ENCODE measurements at regions of chrX and their contacts with region 1.

Region 1: GRCh38 chrX:55160685-55161552 is 59.2 kb upstream of the PAGE5 start:
- DNase-seq: peak; percentile 70 to 88 (median 76)
- ATAC-seq: peak; percentile 100
- H3K4me3 ChIP-seq: peak overlapping the region; percentile 53
- H3K27ac ChIP-seq: peak overlapping the region; percentile 81
- H3K4me1 ChIP-seq: peaks cover 0 to 9% of the 10 kb centered on the region in 2 experiments; a peak in 3 of 5 replicates
- H3K27me3 ChIP-seq: no peaks in the 10 kb centered on the region
- CTCF ChIP-seq: peak; percentile 78 to 91 (median 81)
- EP300 ChIP-seq: no peak; the same call in 1 of the 2 replicates
- POLR2A ChIP-seq: peak; percentile 73
- RAD21 ChIP-seq: peak; percentile 76 to 84

Region 2: GRCh38 chrX:54891573-54891972 is 269.3 kb before region 1 on chrX:
- CTCF ChIA-PET with region 1: no interaction called
- POLR2A ChIA-PET with region 1: no interaction called
- in situ Hi-C with region 1: loop called (anchors 5 kb)
- intact Hi-C with region 1: no loop called
- DNase-seq: peak; percentile 16 to 58 (median 17)
- ATAC-seq: peak; percentile 81
- H3K4me3 ChIP-seq: no peak overlapping the region
- H3K27ac ChIP-seq: no peak overlapping the region
- H3K4me1 ChIP-seq: no peaks in the 10 kb centered on the region
- H3K27me3 ChIP-seq: no peaks in the 10 kb centered on the region
- CTCF ChIP-seq: peak; percentile 36 to 53 (median 38); a peak in 4 of 6 replicates
- EP300 ChIP-seq: no peak
- POLR2A ChIP-seq: no peak
- RAD21 ChIP-seq: peak; percentile 51 to 74

Region 3: DNA sequence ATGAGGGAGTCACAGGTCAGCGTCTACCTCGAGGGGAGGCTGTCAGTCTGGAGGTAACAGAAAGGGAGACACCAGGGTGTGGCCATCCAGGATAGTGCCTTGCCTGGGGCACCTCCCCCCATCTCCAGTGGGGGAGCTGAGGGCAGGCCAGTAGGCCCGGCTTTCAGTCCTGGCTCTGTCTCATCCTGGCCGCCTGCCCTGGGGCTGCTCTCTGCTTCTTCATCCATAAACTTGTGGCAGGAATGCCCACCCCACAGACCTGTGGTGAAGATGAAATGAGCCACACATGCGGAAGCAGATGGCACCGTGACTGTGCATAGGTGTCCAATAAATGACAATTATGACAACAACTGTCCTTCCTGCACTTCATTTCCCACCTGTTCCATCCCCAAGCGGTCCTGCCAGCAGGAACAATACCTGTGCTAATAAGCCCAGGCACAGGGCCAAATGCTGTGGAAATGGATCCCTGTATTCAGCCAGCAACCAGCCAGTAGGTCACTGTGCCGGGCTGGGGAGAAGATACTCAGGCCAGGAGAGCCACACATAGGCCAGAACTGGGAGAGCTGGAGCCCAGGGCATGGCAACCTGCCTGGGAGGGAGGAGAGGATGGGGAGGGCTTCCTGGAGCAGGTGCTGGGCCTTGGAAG is 210.1 kb before region 1 on chrX:
- CTCF ChIA-PET with region 1: no interaction called
- POLR2A ChIA-PET with region 1: no interaction called
- in situ Hi-C with region 1: no loop called
- intact Hi-C with region 1: no loop called
- DNase-seq: no peak
- ATAC-seq: no peak
- H3K4me3 ChIP-seq: no peak overlapping the region
- H3K27ac ChIP-seq: no peak overlapping the region
- H3K4me1 ChIP-seq: peaks cover 0 to 5% of the 10 kb centered on the region in 2 experiments; a peak in 1 of 5 replicates
- H3K27me3 ChIP-seq: peaks cover 0 to 9% of the 10 kb centered on the region in 2 experiments; a peak in 1 of 5 replicates
- CTCF ChIP-seq: no peak
- EP300 ChIP-seq: no peak
- POLR2A ChIP-seq: no peak
- RAD21 ChIP-seq: no peak

Region 4: DNA sequence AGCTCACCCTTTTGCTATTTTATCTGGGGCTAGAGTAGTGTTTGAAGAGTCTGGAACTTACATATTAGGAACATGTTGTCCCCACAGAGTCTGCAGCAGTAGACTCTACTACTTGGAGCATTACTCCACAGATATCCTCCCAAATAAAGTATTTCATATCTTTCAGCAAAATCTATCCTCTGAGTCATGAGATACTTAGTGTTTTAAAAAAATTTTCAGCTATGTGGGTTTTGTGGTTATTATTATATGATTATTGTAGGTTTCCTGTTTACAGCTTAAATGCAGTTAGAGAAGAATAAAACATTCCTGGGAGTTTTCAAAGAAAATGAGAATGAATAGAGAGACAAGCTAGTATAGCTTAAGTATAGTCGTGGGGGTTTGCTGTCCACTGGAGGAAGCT is 41.2 kb before region 1 on chrX:
- CTCF ChIA-PET with region 1: no interaction called
- POLR2A ChIA-PET with region 1: no interaction called
- in situ Hi-C with region 1: no loop called
- intact Hi-C with region 1: loop called (anchors 2 kb)
- DNase-seq: no peak
- ATAC-seq: no peak
- H3K4me3 ChIP-seq: no peak overlapping the region
- H3K27ac ChIP-seq: no peak overlapping the region; the same call in 2 of the 3 replicates
- H3K4me1 ChIP-seq: peaks cover 0 to 62% of the 10 kb centered on the region in 2 experiments; a peak in 3 of 5 replicates
- H3K27me3 ChIP-seq: no peaks in the 10 kb centered on the region; a peak in 1 of 5 replicates
- CTCF ChIP-seq: no peak
- EP300 ChIP-seq: no peak
- POLR2A ChIP-seq: no peak
- RAD21 ChIP-seq: no peak